Right ventricle myocardium superior (tissue), 1 donor: ENCODE measurements at regions of chr13 and their contacts with region 1.

Region 1: DNA sequence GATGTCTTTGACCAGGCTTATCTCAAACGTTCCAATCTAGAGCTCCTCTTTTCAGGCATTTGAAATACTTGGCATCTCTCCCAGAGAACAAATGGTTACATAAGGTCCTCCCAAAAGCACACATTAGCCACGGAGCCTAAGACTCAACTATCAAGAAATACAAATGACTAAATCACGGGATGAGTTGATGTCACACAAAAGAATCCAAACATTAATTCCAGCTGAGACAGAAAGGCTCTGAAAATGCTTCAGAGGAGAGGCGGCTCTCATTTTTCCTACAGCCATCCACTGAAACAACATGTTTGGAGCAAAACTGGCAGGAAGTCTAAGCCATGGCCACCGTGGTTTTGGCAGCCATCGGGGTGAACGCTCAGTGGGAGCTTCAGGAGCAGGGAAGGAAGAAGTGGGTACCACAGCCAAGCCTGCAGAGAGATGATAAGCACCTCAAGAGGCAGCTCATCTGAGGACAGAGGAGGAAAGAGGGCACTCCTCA is 122.5 kb downstream of the STK24 start:
- DNase-seq: no peak
- ATAC-seq: peak; percentile 79

Region 2: GRCh38 chr13:98576963-98577822 is 122.8 kb after region 1 on chr13 and contains the start of gene STK24:
- intact Hi-C with region 1: loop called (anchors 5 kb)
- DNase-seq: peak; percentile 81
- ATAC-seq: peak; percentile 82
- total RNA-seq, gene STK24: 56.1 TPM

Region 3: GRCh38 chr13:99200432-99201167 is 746.2 kb after region 1 on chr13 and contains the start of gene UBAC2:
- intact Hi-C with region 1: no loop called
- DNase-seq: peak; percentile 97
- ATAC-seq: peak; percentile 99
- total RNA-seq, gene UBAC2: 35.4 TPM